RWPE1 (cell line): ENCODE measurements at regions of chr10 and their contacts with region 1.

Region 1: DNA sequence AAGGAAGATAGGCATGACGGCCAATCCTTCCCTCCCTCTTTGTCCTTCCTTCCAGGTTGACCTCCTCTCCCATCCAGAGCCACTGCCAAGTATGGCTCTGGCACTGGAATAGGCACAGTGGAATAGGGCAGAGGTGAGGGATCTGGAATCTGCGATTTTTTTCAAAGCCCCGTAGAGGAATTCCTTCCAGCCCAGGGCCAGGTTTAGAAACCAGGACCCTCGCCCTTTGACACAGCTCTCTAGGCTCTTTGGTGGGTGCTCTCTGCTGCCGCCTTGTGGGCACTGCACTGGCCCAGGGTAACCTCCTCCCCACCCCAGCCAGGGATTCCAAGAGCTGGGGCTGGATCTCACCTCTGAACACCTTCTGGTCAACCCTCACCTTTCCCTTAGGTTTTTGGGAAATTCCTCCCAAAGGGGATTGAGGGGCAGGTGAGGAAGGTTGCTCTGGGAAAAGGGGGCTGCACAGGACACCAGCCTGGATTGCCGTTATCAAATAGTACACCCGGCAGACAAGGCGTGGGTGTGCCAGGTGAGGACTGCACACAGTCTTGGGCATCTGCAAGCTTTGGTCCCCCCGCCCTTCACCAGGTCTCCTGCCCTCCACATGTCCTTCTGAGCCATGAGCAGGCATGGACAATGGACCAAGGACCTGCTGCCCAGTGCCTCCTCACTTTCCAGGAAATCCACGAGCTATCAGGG is 22.8 kb downstream of the C10orf105 start:
- DNase-seq: peak; percentile 74
- H3K27ac ChIP-seq: no peak overlapping the region
- CTCF ChIP-seq: peak; percentile 84

Region 2: GRCh38 chr10:71319042-71319799 is 377.6 kb before region 1 on chr10 and contains the start of gene SLC29A3:
- CTCF ChIA-PET with region 1: interaction called, 10 read pairs
- POLR2A ChIA-PET with region 1: no interaction called
- DNase-seq: peak; percentile 81
- H3K27ac ChIP-seq: peak within 1 kb of the TSS; percentile 27; the same call in 1 of the 2 replicates
- CTCF ChIP-seq: peak; percentile 76

Region 3: GRCh38 chr10:71679425-71679824 is 17.4 kb before region 1 on chr10:
- CTCF ChIA-PET with region 1: interaction called, 12 read pairs
- POLR2A ChIA-PET with region 1: no interaction called
- DNase-seq: no peak
- H3K27ac ChIP-seq: no peak overlapping the region
- CTCF ChIP-seq: no peak

Region 4: GRCh38 chr10:71714031-71714410 is 17.2 kb after region 1 on chr10:
- CTCF ChIA-PET with region 1: interaction called, 23 read pairs
- POLR2A ChIA-PET with region 1: no interaction called
- DNase-seq: no peak
- H3K27ac ChIP-seq: peak overlapping the region; percentile 84
- CTCF ChIP-seq: no peak

Region 5: GRCh38 chr10:71771821-71772617 is 75.2 kb after region 1 on chr10:
- CTCF ChIA-PET with region 1: interaction called, 20 read pairs
- POLR2A ChIA-PET with region 1: no interaction called
- DNase-seq: peak; percentile 67
- H3K27ac ChIP-seq: peak overlapping the region; percentile 82
- CTCF ChIP-seq: no peak

Region 6: GRCh38 chr10:72276421-72277339 is 579.9 kb after region 1 on chr10:
- CTCF ChIA-PET with region 1: no interaction called
- POLR2A ChIA-PET with region 1: no interaction called
- DNase-seq: peak; percentile 81
- H3K27ac ChIP-seq: peak overlapping the region; percentile 100
- CTCF ChIP-seq: no peak